GM12878 (cell line): ENCODE measurements at regions of chr6 and their contacts with region 1.

Region 1: DNA sequence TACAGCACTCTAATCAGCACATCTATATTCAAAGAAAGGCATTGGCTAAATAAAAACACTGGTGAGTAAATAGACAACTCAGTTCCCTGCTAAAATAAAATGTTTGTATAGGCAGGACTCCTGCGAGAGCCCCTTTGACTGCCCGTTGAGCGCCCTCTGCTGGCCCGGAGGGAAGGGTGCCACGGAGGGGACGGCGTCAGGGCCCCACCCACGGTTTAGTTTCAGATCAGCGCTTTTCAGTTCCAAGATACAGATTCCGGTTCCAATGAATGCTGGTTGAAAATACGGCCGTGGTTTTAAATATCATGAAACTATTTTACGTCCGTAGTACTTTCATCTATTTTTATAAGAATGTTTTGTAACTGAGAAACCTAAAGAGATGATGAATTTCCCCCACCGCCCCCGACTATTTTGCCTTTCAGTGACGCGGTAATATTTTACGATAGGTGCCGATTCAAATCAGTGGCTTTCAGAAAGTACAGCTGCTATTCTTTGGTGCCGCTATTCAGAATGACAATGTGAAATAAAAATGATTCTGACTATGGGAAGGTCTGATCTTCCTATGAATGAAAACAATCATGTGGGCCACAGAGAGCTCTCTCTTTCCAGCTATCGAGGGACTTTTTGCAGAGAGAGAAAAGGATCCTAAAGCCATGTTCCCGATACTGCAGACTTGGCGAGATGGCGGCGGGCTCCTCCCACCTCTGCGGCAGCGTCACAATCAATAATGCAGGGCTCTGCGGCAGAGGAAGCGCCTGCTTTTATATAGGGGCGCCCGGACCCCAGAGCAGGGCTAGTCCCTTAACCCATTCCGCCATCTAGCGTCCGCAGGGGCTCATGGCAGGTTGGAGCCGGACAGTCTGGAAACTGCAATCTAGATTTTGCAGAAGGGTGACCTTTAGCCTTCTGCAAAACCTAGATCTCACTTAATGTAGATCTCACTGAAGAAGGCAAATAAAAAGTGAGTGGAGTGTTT is 10.6 kb upstream of the CCN6 start:
- DNase-seq: peak; percentile 45
- ATAC-seq: peak; percentile 97
- H3K4me3 ChIP-seq: peak overlapping the region; percentile 94
- H3K27ac ChIP-seq: peak overlapping the region; percentile 51
- H3K4me1 ChIP-seq: no peaks in the 10 kb centered on the region
- H3K27me3 ChIP-seq: no peaks in the 10 kb centered on the region
- CTCF ChIP-seq: peak; percentile 97 to 98 (median 97)
- EP300 ChIP-seq: peak in 1 of 2 experiments; percentile 50; a peak in 1 of 4 replicates
- POLR2A ChIP-seq: 0 out of 2 replicates have a peak, but pooled peaks have one; percentile 32
- RAD21 ChIP-seq: peak; percentile 98

Region 2: GRCh38 chr6:111259089-111259831 is 784.1 kb before region 1 on chr6:
- CTCF ChIA-PET with region 1: interaction called, 31 read pairs
- POLR2A ChIA-PET with region 1: interaction called, 3 read pairs
- RAD21 ChIA-PET with region 1: interaction called, 18 read pairs
- SMC1A ChIA-PET with region 1: interaction called, 11 read pairs
- in situ Hi-C with region 1: loop called (anchors 5 kb)
- intact Hi-C with region 1: loop called (anchors 1 kb)
- DNase-seq: peak; percentile 99
- ATAC-seq: peak; percentile 97
- H3K4me3 ChIP-seq: peak overlapping the region; percentile 72
- H3K27ac ChIP-seq: peak overlapping the region; percentile 90
- H3K4me1 ChIP-seq: no peaks in the 10 kb centered on the region
- H3K27me3 ChIP-seq: no peaks in the 10 kb centered on the region
- CTCF ChIP-seq: peak; percentile 95 to 99 (median 97); a peak in 5 of 6 replicates
- EP300 ChIP-seq: peak in 1 of 2 experiments; percentile 88; a peak in 2 of 4 replicates
- POLR2A ChIP-seq: peak; percentile 95
- RAD21 ChIP-seq: peak; percentile 93

Region 3: GRCh38 chr6:111565326-111566221 is 477.7 kb before region 1 on chr6:
- CTCF ChIA-PET with region 1: interaction called, 13 read pairs
- POLR2A ChIA-PET with region 1: no interaction called
- RAD21 ChIA-PET with region 1: interaction called, 3 read pairs
- SMC1A ChIA-PET with region 1: no interaction called
- in situ Hi-C with region 1: no loop called
- intact Hi-C with region 1: no loop called
- DNase-seq: no peak
- ATAC-seq: peak; percentile 96
- H3K4me3 ChIP-seq: no peak overlapping the region
- H3K27ac ChIP-seq: peak overlapping the region; percentile 53
- H3K4me1 ChIP-seq: peaks cover 15% of the 10 kb centered on the region
- H3K27me3 ChIP-seq: no peaks in the 10 kb centered on the region
- CTCF ChIP-seq: peak; percentile 41 to 47 (median 46); a peak in 5 of 6 replicates
- EP300 ChIP-seq: no peak
- POLR2A ChIP-seq: peak; percentile 50
- RAD21 ChIP-seq: peak; percentile 59

Region 4: DNA sequence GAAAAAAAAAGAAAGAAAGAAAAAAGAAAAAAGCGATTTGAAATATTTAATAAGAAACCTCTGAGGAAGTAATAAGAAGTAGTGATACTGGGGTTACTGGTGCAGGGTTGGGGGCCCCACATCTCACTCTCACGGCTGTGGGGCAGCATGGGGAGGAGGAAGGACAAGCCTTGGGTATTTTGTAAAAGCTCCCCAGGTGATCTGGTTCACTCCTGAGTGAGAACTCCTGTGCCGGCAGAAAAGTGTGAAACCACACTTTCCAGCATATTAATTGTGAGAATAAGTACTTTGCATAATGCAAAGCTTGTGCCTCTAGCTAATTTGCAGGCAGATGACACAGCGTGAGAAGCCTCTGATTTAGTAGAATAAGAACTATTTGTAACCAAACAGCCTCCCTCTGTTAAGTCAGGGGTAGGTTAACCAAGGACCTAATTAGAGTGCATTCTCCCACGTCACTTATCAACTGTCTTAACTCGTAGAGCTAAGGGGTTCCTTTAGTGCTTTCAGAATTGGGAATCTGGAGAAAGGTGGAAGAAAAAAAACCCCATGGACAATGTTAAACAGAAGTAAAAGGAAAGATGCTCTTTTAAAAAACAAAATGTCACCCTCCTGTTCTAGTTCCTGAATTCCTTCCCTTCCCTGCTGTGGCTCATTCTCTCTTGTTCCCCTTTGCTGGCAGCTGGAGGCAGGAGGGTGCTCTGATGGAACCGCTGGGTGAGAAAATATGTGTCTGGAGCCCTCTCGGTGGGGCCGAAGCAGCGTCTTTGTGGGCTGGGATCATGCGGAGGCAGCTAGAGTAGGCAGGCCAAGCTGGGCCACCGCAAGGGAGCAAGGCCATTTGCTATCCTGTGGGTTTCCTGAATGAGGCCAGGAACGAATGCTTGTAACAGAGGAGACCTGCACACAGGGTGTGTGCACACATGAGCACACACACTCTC is 278.8 kb before region 1 on chr6:
- CTCF ChIA-PET with region 1: interaction called, 5 read pairs
- POLR2A ChIA-PET with region 1: no interaction called
- RAD21 ChIA-PET with region 1: interaction called, 10 read pairs
- SMC1A ChIA-PET with region 1: interaction called, 4 read pairs
- in situ Hi-C with region 1: no loop called
- intact Hi-C with region 1: no loop called
- DNase-seq: peak; percentile 94
- ATAC-seq: peak; percentile 83
- H3K4me3 ChIP-seq: peak overlapping the region; percentile 24; the same call in 1 of the 2 replicates
- H3K27ac ChIP-seq: peak overlapping the region; percentile 93
- H3K4me1 ChIP-seq: peaks cover 88% of the 10 kb centered on the region
- H3K27me3 ChIP-seq: no peaks in the 10 kb centered on the region
- CTCF ChIP-seq: no peak
- EP300 ChIP-seq: peak; percentile 74 to 89; a peak in 2 of 4 replicates
- POLR2A ChIP-seq: no peak; the same call in 1 of the 2 replicates
- RAD21 ChIP-seq: 0 out of 2 replicates have a peak, but pooled peaks have one; percentile 16

Region 5: GRCh38 chr6:111997078-111997852 is 46.1 kb before region 1 on chr6:
- CTCF ChIA-PET with region 1: interaction called, 23 read pairs
- POLR2A ChIA-PET with region 1: no interaction called
- RAD21 ChIA-PET with region 1: interaction called, 4 read pairs
- SMC1A ChIA-PET with region 1: interaction called, 9 read pairs
- in situ Hi-C with region 1: no loop called
- intact Hi-C with region 1: loop called (anchors 1 kb)
- DNase-seq: no peak
- ATAC-seq: peak; percentile 85
- H3K4me3 ChIP-seq: no peak overlapping the region
- H3K27ac ChIP-seq: no peak overlapping the region
- H3K4me1 ChIP-seq: peaks cover 28% of the 10 kb centered on the region
- H3K27me3 ChIP-seq: no peaks in the 10 kb centered on the region
- CTCF ChIP-seq: peak; percentile 85 to 95 (median 93); a peak in 5 of 6 replicates
- EP300 ChIP-seq: no peak
- POLR2A ChIP-seq: no peak
- RAD21 ChIP-seq: peak; percentile 99

Region 6: GRCh38 chr6:112087136-112087911 is 44.0 kb after region 1 on chr6 and contains the starts of genes FAM229B and TUBE1:
- CTCF ChIA-PET with region 1: interaction called, 12 read pairs
- POLR2A ChIA-PET with region 1: no interaction called
- RAD21 ChIA-PET with region 1: no interaction called
- SMC1A ChIA-PET with region 1: interaction called, 4 read pairs
- in situ Hi-C with region 1: no loop called
- intact Hi-C with region 1: no loop called
- DNase-seq: peak; percentile 79
- ATAC-seq: peak; percentile 98
- H3K4me3 ChIP-seq: peak within 1 kb of the TSS; percentile 88
- H3K27ac ChIP-seq: peak within 1 kb of the TSS; percentile 49
- H3K4me1 ChIP-seq: no peaks in the 10 kb centered on the region
- H3K27me3 ChIP-seq: peaks cover 0 to 4% of the 10 kb centered on the region in 2 experiments; a peak in 1 of 4 replicates
- CTCF ChIP-seq: 0 out of 6 replicates have a peak, but pooled peaks of 1 of the 3 experiments have one; percentile 1
- EP300 ChIP-seq: no peak
- POLR2A ChIP-seq: peak; percentile 89
- RAD21 ChIP-seq: no peak
- polyA plus RNA-seq, gene FAM229B: 5.3 to 5.7 TPM
- polyA plus RNA-seq, gene TUBE1: 6.3 to 8.6 TPM